Activated CD4-positive, alpha-beta memory T cell treated with anti-CD3 and anti-CD28 coated beads for 36 hours (primary cell): ENCODE measurements at regions of chr3 and their contacts with region 1.

Region 1: DNA sequence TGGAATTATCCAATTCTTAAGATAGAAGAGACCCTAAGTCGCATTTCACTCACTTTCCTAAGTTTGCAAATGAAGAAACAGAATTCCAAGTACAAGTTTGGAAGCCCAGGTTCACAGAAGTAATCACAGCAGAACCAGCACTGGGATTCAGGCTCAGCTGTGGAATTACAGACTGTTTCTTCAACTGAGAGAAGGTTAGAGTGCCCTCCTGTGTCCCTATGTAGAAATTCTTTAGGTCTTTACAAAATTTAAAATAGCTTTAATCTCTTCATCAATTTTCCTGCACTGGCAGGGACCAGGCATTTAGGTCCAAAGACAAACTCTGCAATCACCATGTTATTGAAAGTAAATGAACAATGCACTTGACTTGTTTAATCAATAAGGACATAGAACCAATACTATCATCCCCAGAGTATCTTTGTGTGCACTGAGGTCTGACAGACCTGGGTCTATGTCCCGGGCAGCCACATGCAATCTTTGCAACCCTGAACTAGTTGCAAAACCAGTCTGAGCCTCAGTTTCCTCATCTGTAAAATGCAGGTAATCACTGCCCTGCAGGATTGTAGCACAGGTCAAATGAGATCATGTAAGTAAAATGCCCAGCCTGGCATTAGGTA is 96.3 kb upstream of the ZBED2 start:
- DNase-seq: no peak
- H3K4me3 Mint-ChIP-seq: no peak overlapping the region
- H3K27ac Mint-ChIP-seq: no peak overlapping the region
- H3K4me1 Mint-ChIP-seq: peaks cover 38% of the 10 kb centered on the region
- H3K27me3 Mint-ChIP-seq: no peaks in the 10 kb centered on the region

Region 2: GRCh38 chr3:111676211-111677006 is 15.0 kb before region 1 on chr3:
- CTCF ChIA-PET with region 1: interaction called, 11 read pairs
- POLR2A ChIA-PET with region 1: interaction called, 4 read pairs
- intact Hi-C with region 1: loop called (anchors 1 kb)
- DNase-seq: peak; percentile 53
- H3K4me3 Mint-ChIP-seq: peak overlapping the region; percentile 94
- H3K27ac Mint-ChIP-seq: peak overlapping the region; percentile 59
- H3K4me1 Mint-ChIP-seq: peaks cover 64% of the 10 kb centered on the region
- H3K27me3 Mint-ChIP-seq: no peaks in the 10 kb centered on the region

Region 3: DNA sequence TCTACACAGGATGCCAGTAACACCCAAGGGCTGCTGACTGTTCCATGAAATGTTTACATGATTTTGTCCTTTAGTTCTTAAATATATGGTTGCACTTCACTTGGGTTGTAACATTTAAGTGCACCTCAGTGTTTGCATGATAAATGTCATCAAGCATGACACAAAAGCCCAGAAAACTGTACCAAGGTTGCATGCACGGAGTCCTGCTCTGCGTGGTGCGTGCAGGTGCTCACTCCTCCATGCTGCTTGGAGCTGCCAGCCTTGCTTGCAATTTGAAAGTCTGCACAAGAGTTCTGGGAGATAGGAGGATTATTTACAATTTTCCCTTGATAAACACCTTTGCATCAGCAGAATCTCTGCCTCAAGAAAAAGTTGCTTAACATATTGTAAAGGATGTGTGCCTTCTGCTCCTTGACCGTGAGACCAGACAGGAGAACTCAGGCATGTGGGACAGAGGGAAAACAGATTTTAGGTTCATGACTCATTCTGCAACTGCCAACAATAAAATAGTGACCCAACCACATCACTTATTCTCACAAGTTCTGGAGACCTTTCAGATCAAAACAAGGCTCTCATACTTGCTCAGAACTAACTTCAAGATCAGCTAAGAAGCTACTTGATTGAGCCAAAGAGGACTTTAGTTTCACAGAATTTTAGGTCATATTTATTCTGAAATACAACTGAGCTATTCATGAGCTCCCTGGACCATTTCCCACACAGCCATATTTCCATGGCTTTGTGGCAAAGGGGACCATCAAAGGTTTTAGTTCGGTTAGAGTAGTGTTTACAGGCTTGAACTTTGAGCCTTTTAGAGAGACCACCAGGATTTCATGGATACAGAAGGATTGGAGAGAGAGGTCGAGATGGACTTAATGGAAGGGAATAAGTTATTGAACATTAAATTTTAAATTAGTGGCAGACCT is 32.2 kb after region 1 on chr3:
- CTCF ChIA-PET with region 1: no interaction called
- POLR2A ChIA-PET with region 1: no interaction called
- intact Hi-C with region 1: no loop called
- DNase-seq: no peak
- H3K4me3 Mint-ChIP-seq: no peak overlapping the region
- H3K27ac Mint-ChIP-seq: no peak overlapping the region
- H3K4me1 Mint-ChIP-seq: peaks cover 2% of the 10 kb centered on the region
- H3K27me3 Mint-ChIP-seq: no peaks in the 10 kb centered on the region

Region 4: GRCh38 chr3:111812701-111813100 is 121.3 kb after region 1 on chr3:
- CTCF ChIA-PET with region 1: no interaction called
- POLR2A ChIA-PET with region 1: no interaction called
- intact Hi-C with region 1: no loop called
- DNase-seq: no peak
- H3K4me3 Mint-ChIP-seq: no peak overlapping the region
- H3K27ac Mint-ChIP-seq: no peak overlapping the region
- H3K4me1 Mint-ChIP-seq: no peaks in the 10 kb centered on the region
- H3K27me3 Mint-ChIP-seq: no peaks in the 10 kb centered on the region

Region 5: GRCh38 chr3:112338021-112338726 is 646.8 kb after region 1 on chr3:
- CTCF ChIA-PET with region 1: no interaction called
- POLR2A ChIA-PET with region 1: no interaction called
- intact Hi-C with region 1: no loop called
- DNase-seq: no peak
- H3K4me3 Mint-ChIP-seq: peak overlapping the region; percentile 35
- H3K27ac Mint-ChIP-seq: peak overlapping the region; percentile 88
- H3K4me1 Mint-ChIP-seq: peaks cover 79% of the 10 kb centered on the region
- H3K27me3 Mint-ChIP-seq: no peaks in the 10 kb centered on the region